Activated CD4-positive, alpha-beta T cell treated with anti-CD3 and anti-CD28 coated beads for 36 hours (primary cell): ENCODE measurements at regions of chr9 and their contacts with region 1.

Region 1: GRCh38 chr9:37565661-37566618 is 10.2 kb downstream of the FBXO10 start:
- DNase-seq: no peak
- ATAC-seq: no peak
- H3K4me3 Mint-ChIP-seq: no peak overlapping the region
- H3K27ac Mint-ChIP-seq: no peak overlapping the region
- H3K4me1 Mint-ChIP-seq: no peaks in the 10 kb centered on the region
- H3K27me3 Mint-ChIP-seq: no peaks in the 10 kb centered on the region

Region 2: GRCh38 chr9:37621273-37622121 is 55.6 kb after region 1 on chr9:
- CTCF ChIA-PET with region 1: no interaction called
- POLR2A ChIA-PET with region 1: no interaction called
- intact Hi-C with region 1: loop called in 1 of 2 experiments (anchors 10 kb)
- DNase-seq: no peak
- ATAC-seq: no peak
- H3K4me3 Mint-ChIP-seq: no peak overlapping the region
- H3K27ac Mint-ChIP-seq: no peak overlapping the region
- H3K4me1 Mint-ChIP-seq: no peaks in the 10 kb centered on the region
- H3K27me3 Mint-ChIP-seq: peaks cover 4% of the 10 kb centered on the region

Region 3: GRCh38 chr9:37683531-37684371 is 117.8 kb after region 1 on chr9:
- CTCF ChIA-PET with region 1: no interaction called
- POLR2A ChIA-PET with region 1: no interaction called
- intact Hi-C with region 1: no loop called
- DNase-seq: no peak
- ATAC-seq: no peak
- H3K4me3 Mint-ChIP-seq: no peak overlapping the region
- H3K27ac Mint-ChIP-seq: no peak overlapping the region
- H3K4me1 Mint-ChIP-seq: no peaks in the 10 kb centered on the region
- H3K27me3 Mint-ChIP-seq: peaks cover 39% of the 10 kb centered on the region